Activated CD4-positive, alpha-beta T cell treated with anti-CD3 and anti-CD28 coated beads for 36 hours (primary cell): ENCODE measurements at regions of chr17 and their contacts with region 1.

Region 1: GRCh38 chr17:29293890-29294579 is at the start of gene NUFIP2:
- DNase-seq: peak; percentile 99
- ATAC-seq: peak; percentile 93
- H3K4me3 Mint-ChIP-seq: peak within 1 kb of the TSS; percentile 100
- H3K27ac Mint-ChIP-seq: peak within 1 kb of the TSS; percentile 99
- H3K4me1 Mint-ChIP-seq: peaks cover 27% of the 10 kb centered on the region
- H3K27me3 Mint-ChIP-seq: no peaks in the 10 kb centered on the region
- total RNA-seq, gene NUFIP2: 55.1 to 93.1 TPM

Region 2: DNA sequence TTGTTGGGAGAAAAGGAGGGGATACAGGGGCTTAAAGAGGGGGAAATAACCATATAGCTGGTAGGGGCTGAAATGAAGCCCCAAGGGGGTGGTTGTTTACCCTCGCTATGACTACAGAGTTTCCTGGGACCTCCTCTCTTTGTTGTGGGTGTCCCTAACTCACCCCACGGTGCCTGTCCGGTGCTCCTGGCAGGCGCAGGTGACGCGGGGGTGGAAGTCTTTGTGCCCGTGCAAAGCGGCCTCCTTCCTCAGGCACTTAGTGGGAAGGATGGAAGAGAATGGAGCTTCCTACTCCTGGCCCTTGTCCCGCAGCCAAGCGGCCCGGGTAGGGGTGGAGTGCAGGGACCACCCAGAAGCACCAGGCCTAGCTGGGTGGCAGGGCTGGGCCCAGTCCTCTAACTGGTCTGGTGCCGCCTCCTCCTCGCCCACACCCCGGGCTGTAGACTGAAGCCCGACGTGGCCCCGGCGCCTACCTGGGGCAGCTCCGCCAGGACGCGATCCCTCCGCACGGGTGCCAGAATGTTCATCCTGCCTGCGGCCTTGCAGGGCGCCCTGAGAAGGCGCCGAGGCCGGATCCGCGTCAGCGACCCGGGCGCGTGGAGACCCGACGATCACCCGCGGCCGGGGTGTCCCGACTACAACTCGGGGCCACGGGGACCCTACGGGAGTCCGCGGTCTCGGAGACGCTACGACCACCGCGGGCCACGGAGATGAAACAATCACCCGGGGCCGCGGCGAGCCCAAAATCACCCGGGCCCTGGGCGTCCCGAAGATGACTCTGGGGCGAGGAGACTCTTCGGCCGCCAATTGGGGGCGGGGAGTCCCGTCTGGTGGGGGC is 577.1 kb before region 1 on chr17:
- CTCF ChIA-PET with region 1: no interaction called
- POLR2A ChIA-PET with region 1: interaction called, 10 read pairs
- intact Hi-C with region 1: loop called in 1 of 2 experiments (anchors 5 kb)
- DNase-seq: peak; percentile 29
- ATAC-seq: no peak
- H3K4me3 Mint-ChIP-seq: peak overlapping the region; percentile 57
- H3K27ac Mint-ChIP-seq: no peak overlapping the region
- H3K4me1 Mint-ChIP-seq: peaks cover 30% of the 10 kb centered on the region
- H3K27me3 Mint-ChIP-seq: peaks cover 19% of the 10 kb centered on the region

Region 3: GRCh38 chr17:29140051-29140621 is 153.9 kb before region 1 on chr17:
- CTCF ChIA-PET with region 1: interaction called, 7 read pairs
- POLR2A ChIA-PET with region 1: interaction called, 7 read pairs
- intact Hi-C with region 1: loop called (anchors 1 to 2 kb)
- DNase-seq: peak; percentile 92
- ATAC-seq: peak; percentile 60
- H3K4me3 Mint-ChIP-seq: peak overlapping the region; percentile 89
- H3K27ac Mint-ChIP-seq: peak overlapping the region; percentile 97
- H3K4me1 Mint-ChIP-seq: peaks cover 74% of the 10 kb centered on the region
- H3K27me3 Mint-ChIP-seq: no peaks in the 10 kb centered on the region

Region 4: GRCh38 chr17:29252101-29252866 is 41.8 kb before region 1 on chr17:
- CTCF ChIA-PET with region 1: interaction called, 6 read pairs
- POLR2A ChIA-PET with region 1: interaction called, 4 read pairs
- intact Hi-C with region 1: loop called in 1 of 2 experiments (anchors 2 kb)
- DNase-seq: no peak
- ATAC-seq: no peak
- H3K4me3 Mint-ChIP-seq: no peak overlapping the region
- H3K27ac Mint-ChIP-seq: no peak overlapping the region
- H3K4me1 Mint-ChIP-seq: peaks cover 12% of the 10 kb centered on the region
- H3K27me3 Mint-ChIP-seq: no peaks in the 10 kb centered on the region

Region 5: GRCh38 chr17:29568331-29569244 is 274.6 kb after region 1 on chr17 and contains the start of gene TP53I13:
- CTCF ChIA-PET with region 1: interaction called, 3 read pairs
- POLR2A ChIA-PET with region 1: interaction called, 5 read pairs
- intact Hi-C with region 1: loop called (anchors 1 to 5 kb)
- DNase-seq: peak; percentile 96
- ATAC-seq: peak; percentile 64
- H3K4me3 Mint-ChIP-seq: peak within 1 kb of the TSS; percentile 97
- H3K27ac Mint-ChIP-seq: peak within 1 kb of the TSS; percentile 96
- H3K4me1 Mint-ChIP-seq: peaks cover 30% of the 10 kb centered on the region
- H3K27me3 Mint-ChIP-seq: no peaks in the 10 kb centered on the region
- total RNA-seq, gene TP53I13: 37.7 to 41.5 TPM

Region 6: GRCh38 chr17:29760761-29761696 is 467.0 kb after region 1 on chr17:
- CTCF ChIA-PET with region 1: no interaction called
- POLR2A ChIA-PET with region 1: no interaction called
- intact Hi-C with region 1: loop called in 1 of 2 experiments (anchors 1 kb)
- DNase-seq: peak; percentile 97
- ATAC-seq: peak; percentile 89
- H3K4me3 Mint-ChIP-seq: peak overlapping the region; percentile 97
- H3K27ac Mint-ChIP-seq: peak overlapping the region; percentile 97
- H3K4me1 Mint-ChIP-seq: peaks cover 30% of the 10 kb centered on the region
- H3K27me3 Mint-ChIP-seq: no peaks in the 10 kb centered on the region

Region 7: DNA sequence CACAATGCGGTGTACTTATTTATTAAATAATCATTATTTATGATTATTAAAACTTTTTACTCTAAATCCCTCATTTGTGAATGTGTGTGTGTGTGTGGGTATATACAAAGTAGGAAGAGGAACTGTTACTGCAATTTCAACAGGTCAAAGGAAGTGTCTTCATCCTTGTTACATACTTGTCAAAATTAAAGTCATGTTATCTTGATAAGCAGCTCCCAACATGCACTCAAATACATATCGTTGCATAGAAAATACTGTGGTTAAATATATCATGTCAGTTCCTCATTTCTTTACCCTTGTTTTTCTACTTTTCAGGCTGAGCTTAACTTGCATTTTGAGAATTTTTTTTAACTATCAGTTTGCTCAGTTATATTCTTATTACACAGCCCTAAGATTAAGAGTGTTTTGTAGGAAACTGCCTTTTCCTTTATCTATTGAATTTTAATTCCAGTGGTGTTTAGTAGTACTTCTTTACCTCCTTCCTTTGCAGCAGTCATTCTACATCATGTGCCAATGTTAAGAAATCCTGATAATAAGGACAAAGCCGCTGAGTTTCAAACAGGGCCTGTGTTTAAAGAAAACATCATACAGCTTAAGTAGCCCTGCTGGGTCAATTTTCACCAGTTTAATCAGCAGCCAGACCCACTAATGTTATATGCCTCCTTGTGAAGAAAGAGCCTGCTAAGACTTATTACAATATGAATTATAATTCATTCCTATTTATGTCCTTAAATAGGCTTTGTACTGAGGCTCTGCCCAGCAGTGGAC is 654.6 kb after region 1 on chr17:
- CTCF ChIA-PET with region 1: no interaction called
- POLR2A ChIA-PET with region 1: no interaction called
- intact Hi-C with region 1: no loop called
- DNase-seq: no peak
- ATAC-seq: no peak
- H3K4me3 Mint-ChIP-seq: no peak overlapping the region
- H3K27ac Mint-ChIP-seq: no peak overlapping the region
- H3K4me1 Mint-ChIP-seq: no peaks in the 10 kb centered on the region
- H3K27me3 Mint-ChIP-seq: no peaks in the 10 kb centered on the region